ENCODE measurements at regions of chr6 and their contacts with region 1.

Region 1: GRCh38 chr6:42661540-42662153 is 60.8 kb downstream of the PRPH2 start:
- DNase-seq: peak; percentile 82
- H3K4me3 ChIP-seq: no peak overlapping the region
- H3K27ac ChIP-seq: no peak overlapping the region
- H3K4me1 ChIP-seq: no peaks in the 10 kb centered on the region
- H3K27me3 ChIP-seq: no peaks in the 10 kb centered on the region
- CTCF ChIP-seq: peak; percentile 86 to 95 (median 87)
- EP300 ChIP-seq: no peak
- POLR2A ChIP-seq: no peak

Region 2: GRCh38 chr6:41545703-41546474 is 1115.8 kb before region 1 on chr6 and contains the start of gene FOXP4:
- in situ Hi-C with region 1: no loop called
- intact Hi-C with region 1: no loop called
- DNase-seq: peak; percentile 92
- H3K4me3 ChIP-seq: peak within 1 kb of the TSS; percentile 72 to 93 (median 84)
- H3K27ac ChIP-seq: peak within 1 kb of the TSS; percentile 87 to 93 (median 90)
- H3K4me1 ChIP-seq: peaks cover 7 to 40% (median 26%) of the 10 kb centered on the region in 4 donors
- H3K27me3 ChIP-seq: peaks cover 5% of the 10 kb centered on the region
- CTCF ChIP-seq: no peak
- EP300 ChIP-seq: no peak
- POLR2A ChIP-seq: no peak
- total RNA-seq, gene FOXP4: 13.8 to 45.6 (median 17.2) TPM

Region 3: GRCh38 chr6:42726485-42727086 is 64.9 kb after region 1 on chr6:
- in situ Hi-C with region 1: loop called in 1 of 4 experiments (anchors 5 kb)
- intact Hi-C with region 1: loop called (anchors 5 kb)
- DNase-seq: peak; percentile 79
- H3K4me3 ChIP-seq: peak overlapping the region; percentile 15 to 59 (median 36)
- H3K27ac ChIP-seq: peak overlapping the region; percentile 76 to 85 (median 82)
- H3K4me1 ChIP-seq: peaks cover 7 to 22% (median 13%) of the 10 kb centered on the region in 4 donors
- H3K27me3 ChIP-seq: no peaks in the 10 kb centered on the region
- CTCF ChIP-seq: peak; percentile 90 to 97 (median 95)
- EP300 ChIP-seq: no peak
- POLR2A ChIP-seq: no peak

Region 4: DNA sequence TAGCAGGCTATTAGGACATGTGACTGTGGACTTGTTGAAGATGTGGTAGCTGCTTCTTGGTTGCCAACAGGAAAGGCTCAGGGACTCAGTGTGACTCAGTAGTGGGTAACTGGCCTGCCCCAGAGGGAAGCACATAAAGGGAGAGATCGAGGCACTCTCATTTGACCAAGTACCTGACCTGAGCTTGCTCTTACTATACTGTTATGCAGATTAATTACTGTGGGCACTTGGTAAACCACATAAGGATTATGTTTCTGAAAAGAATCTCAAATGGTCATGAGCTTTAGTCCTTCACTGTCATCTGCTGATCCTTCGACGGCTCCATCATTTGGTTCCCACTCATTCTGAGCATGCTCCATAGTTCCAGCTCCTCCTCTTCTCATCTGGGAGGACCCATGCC is 169.6 kb after region 1 on chr6:
- in situ Hi-C with region 1: no loop called
- intact Hi-C with region 1: no loop called
- DNase-seq: no peak
- H3K4me3 ChIP-seq: no peak overlapping the region
- H3K27ac ChIP-seq: no peak overlapping the region
- H3K4me1 ChIP-seq: no peaks in the 10 kb centered on the region
- H3K27me3 ChIP-seq: no peaks in the 10 kb centered on the region
- CTCF ChIP-seq: no peak
- EP300 ChIP-seq: no peak
- POLR2A ChIP-seq: no peak

Region 5: DNA sequence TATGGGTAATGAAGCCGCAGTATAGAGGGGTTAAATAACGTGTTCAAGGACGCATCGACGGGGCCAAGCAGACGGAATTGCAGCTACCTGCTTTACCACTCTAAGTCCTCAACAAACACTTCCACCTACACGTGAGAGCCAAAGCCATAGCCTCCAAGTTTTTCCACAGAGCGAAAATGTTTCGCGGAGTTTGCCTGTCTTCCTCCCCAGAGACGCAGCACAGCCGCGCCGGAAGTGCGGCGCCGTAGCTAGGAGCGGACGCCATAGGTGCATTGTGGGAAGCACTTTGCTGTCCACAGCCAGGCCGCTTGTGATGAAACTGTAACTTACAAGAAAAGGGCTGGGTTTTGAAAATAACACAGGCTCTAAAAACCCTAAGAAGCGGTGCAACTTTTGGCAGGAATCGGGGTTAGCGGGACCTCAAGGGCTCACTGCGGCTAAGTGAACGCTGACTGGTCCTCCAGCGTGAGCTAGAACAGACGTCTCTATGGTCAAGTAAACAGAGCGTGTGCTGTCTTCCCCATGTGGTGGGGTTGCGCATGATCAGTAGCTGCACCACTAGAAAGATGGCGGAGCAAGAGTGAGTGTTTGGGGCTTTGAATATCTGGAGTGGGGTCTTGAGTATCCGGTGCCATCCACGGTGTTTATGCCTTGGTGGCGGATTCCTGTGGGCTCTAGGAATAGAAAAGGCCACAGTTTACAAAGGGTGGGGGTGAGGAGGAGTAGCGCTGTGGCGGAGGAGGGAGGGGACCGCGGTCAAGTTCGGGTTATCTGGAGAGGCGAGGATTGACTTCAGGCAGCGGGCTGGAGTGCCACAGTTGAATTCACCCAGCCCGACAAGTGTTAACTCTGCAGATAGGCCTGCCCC is 218.0 kb after region 1 on chr6 and contains the start of gene RPL7L1:
- in situ Hi-C with region 1: loop called (anchors 5 to 10 kb)
- intact Hi-C with region 1: loop called (anchors 5 kb)
- DNase-seq: peak; percentile 84
- H3K4me3 ChIP-seq: peak within 1 kb of the TSS; percentile 33 to 53 (median 48)
- H3K27ac ChIP-seq: peak within 1 kb of the TSS; percentile 86 to 95 (median 91)
- H3K4me1 ChIP-seq: peaks cover 7 to 26% (median 16%) of the 10 kb centered on the region in 4 donors
- H3K27me3 ChIP-seq: no peaks in the 10 kb centered on the region
- CTCF ChIP-seq: peak in 4 of 5 experiments; percentile 12 to 72 (median 45)
- EP300 ChIP-seq: no peak
- POLR2A ChIP-seq: peak; percentile 71
- total RNA-seq, gene RPL7L1: 27.3 to 57.1 (median 43.4) TPM

Region 6: DNA sequence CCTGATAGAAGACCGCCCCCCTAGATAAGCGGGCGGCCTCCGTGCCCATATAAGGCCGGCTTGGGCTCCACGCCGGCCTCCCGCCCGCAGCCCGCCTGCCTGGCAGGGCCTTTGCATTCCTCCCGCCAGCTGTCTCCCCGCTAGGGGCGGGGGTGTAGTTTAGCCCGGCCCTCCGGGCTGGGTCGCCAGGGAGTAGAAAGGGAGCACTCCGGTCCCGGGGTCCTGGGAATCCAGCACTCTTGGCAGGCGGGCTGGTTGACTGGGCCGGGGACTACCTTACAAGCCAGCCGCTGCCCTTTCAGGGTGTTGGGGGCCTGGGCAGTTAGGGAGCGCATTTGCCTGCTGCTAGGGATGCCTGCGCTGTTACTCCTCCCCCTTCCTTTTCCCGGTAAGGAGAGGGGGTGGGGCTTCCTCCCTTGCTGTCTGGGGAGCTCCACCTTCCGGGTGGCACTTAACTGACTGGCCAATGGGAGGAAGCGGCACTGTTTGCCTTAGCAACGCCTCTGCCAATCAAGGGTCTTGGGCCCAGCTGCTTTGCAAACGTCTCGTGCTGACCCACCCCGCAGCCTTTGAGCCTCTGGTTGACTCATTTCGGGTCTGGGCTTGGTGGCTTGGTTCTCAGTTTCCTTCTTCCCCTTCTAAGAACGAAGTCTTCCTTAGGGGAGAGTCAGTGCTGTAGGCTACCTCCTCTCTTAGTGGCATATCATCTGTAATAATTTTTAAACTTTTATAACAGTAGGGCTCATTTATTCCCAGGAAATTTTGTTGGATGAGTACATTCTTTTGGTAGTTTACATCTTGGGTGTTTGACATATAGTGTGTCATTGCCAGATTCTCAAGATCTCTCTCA is 512.8 kb after region 1 on chr6:
- in situ Hi-C with region 1: loop called in 1 of 4 experiments (anchors 25 kb)
- intact Hi-C with region 1: no loop called
- DNase-seq: peak; percentile 98
- H3K4me3 ChIP-seq: peak overlapping the region in 3 of 4 donors; percentile 20 to 93 (median 44)
- H3K27ac ChIP-seq: peak overlapping the region; percentile 95 to 99 (median 97)
- H3K4me1 ChIP-seq: peaks cover 14 to 36% (median 33%) of the 10 kb centered on the region in 4 donors
- H3K27me3 ChIP-seq: no peaks in the 10 kb centered on the region
- CTCF ChIP-seq: peak in 4 of 5 experiments; percentile 13 to 56 (median 30)
- EP300 ChIP-seq: peak; percentile 4
- POLR2A ChIP-seq: peak; percentile 48